ENCODE measurements at regions of chr15 and their contacts with region 1.

Region 1: DNA sequence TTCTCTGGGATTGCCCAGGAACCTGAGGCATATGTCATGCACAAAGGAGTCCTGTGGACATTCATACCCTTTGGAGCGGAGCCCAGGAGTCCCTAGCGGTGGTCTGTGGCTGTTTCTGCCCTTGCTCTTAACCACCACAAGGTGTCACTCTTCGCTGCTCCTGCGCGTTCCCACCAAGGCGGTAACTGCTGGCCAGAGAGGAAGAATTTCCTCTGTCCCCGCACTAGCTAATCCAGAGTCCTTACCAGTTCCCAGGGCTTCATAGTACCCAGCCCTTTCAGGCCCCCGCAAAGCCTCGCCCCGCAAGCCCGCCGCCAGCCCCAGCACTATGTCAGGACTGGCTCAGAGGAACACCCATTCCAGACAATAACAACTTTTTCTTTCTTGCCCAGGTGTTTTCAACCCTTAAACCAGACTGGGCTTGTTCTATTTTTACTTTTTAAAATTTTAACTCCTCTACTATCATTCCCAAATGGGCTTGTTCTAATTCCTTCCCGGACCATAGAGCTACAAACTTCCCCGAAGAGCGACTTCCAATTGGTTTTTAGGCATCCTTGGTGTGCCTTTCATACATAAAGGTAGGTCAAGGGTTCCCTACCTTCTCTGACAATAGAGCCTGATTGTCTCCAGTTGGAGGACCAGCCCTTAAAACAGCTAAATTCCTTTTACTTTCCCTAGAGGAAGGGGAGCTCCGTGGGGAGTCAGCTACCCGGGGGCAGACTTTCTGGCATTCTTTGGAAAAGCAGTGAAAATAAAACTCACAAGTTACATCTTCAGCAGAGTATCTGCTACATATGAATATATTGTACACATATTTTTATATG is 31.8 kb upstream of the ZNF774 start:
- DNase-seq: peak; percentile 79 to 81 (median 79)
- ATAC-seq: peak; percentile 94
- H3K4me3 ChIP-seq: no peak overlapping the region
- H3K4me1 ChIP-seq: peaks cover 10% of the 10 kb centered on the region
- CTCF ChIP-seq: peak; percentile 96

Region 2: GRCh38 chr15:90126457-90127435 is 193.5 kb before region 1 on chr15:
- intact Hi-C with region 1: no loop called
- DNase-seq: peak in 1 of 3 donors; percentile 53
- ATAC-seq: peak; percentile 7
- H3K4me3 ChIP-seq: no peak overlapping the region
- H3K4me1 ChIP-seq: no peaks in the 10 kb centered on the region
- CTCF ChIP-seq: no peak

Region 3: DNA sequence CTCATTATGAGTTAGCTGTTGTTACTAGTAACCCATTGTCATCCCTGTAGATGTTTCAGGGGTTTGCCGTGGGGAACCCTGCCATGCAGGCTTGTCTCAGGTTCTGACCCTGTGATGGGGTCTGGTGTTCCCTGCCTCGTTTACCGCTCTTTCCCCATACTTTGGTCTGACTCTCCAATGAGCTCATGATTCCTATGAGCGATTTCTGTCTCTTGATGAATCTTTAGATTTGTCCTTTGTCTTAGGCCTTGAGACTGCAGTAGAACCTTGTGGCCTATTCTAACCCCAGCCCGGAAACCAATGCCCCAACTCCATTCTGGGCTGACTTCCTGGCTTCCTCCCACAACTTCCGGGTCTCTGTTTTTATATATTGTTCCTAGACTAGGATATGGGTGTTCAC is 56.5 kb after region 1 on chr15:
- intact Hi-C with region 1: no loop called
- DNase-seq: no peak
- ATAC-seq: peak; percentile 55
- H3K4me3 ChIP-seq: no peak overlapping the region
- H3K4me1 ChIP-seq: peaks cover 16% of the 10 kb centered on the region
- CTCF ChIP-seq: no peak

Region 4: GRCh38 chr15:90482124-90483011 is 162.1 kb after region 1 on chr15:
- intact Hi-C with region 1: loop called (anchors 5 kb)
- DNase-seq: peak in 1 of 3 donors; percentile 71
- ATAC-seq: peak; percentile 57
- H3K4me3 ChIP-seq: no peak overlapping the region
- H3K4me1 ChIP-seq: no peaks in the 10 kb centered on the region
- CTCF ChIP-seq: peak; percentile 42

Measured in mucosa of descending colon (tissue), 3 donors.